ENCODE measurements at regions of chr1 and their contacts with region 1.

Region 1: DNA sequence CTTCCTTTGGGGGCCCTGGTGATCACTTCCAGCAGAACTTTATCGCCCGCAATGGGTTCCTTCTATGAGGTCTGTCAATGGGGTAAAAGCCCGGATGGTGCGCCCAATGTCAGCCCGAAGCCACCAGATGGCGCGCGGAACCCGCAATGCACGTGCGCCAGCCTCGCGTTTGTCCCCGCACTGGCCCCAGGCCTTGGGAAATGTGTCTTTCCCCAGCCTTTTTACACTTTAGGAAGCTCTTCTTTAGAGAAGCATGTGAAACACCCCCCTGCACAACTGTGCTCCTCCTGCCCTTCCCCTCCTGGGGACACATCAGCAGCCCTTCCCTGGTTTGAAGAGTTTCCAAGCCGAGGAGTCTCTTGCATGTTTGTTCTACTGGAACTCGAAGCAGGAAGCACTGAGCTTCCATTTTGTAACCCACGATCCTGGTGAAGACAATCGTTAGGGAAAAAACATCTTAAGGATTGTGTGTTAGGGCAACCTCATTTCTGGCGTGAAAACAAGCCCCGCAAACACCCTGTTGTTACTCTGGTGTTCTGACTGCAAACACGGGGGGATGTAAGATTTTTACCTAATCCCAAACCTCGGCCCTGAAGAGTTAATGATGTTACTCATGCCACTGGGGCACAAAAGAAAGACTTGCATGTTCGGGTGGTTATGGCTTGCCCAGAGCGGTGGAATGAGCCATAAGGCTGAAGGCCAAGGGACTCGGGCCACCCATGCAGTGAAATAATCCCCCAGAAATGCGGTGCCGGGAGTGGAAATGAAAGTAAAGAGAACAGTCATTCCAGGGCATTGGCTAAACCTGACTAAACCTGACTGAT is 20.4 kb upstream of the TARBP1 start:
- DNase-seq: peak; percentile 95
- H3K4me3 ChIP-seq: peak overlapping the region in 1 of 2 donors; percentile 13
- H3K27ac ChIP-seq: peak overlapping the region; percentile 31 to 89
- H3K4me1 ChIP-seq: peaks cover 18% of the 10 kb centered on the region
- H3K27me3 ChIP-seq: no peaks in the 10 kb centered on the region
- CTCF ChIP-seq: peak; percentile 88 to 97 (median 88)
- POLR2A ChIP-seq: no peak

Region 2: DNA sequence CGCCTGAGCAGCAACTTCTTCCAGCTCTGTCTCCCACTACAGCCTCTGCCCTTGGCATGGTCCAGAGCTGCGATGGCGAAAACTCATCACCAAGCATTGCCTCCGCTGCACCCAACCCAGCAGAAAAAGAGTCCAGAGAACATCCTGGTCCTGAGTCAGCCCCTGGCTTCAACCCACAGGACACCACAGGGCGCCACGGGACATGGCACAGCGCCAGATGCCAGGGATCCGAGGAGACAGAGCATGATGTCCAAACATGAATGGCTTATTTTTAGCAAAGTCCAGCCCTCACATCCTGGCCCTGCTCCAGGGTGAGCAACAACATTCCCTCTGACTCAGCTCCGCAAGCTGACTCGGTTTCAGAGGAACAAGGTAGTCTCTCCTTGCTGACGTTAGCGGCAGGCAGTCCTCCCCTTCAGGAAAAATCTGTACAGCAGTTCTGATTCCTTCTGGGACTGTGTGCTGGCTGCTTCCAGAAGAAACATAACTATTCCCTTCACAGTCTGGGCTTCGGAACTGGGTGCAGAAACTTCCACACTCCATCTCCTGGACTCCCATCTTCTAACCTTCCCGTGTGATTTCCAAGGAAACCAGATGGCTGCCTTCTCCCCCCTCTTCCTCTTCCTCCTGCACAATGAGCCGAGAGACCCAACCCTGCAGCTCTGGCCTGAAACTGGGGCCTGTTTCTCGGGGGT is 498.0 kb after region 1 on chr1:
- intact Hi-C with region 1: loop called (anchors 10 kb)
- DNase-seq: peak; percentile 94
- H3K4me3 ChIP-seq: no peak overlapping the region
- H3K27ac ChIP-seq: peak overlapping the region; percentile 53 to 85
- H3K4me1 ChIP-seq: peaks cover 18% of the 10 kb centered on the region
- H3K27me3 ChIP-seq: no peaks in the 10 kb centered on the region
- CTCF ChIP-seq: no peak
- POLR2A ChIP-seq: no peak

Region 3: DNA sequence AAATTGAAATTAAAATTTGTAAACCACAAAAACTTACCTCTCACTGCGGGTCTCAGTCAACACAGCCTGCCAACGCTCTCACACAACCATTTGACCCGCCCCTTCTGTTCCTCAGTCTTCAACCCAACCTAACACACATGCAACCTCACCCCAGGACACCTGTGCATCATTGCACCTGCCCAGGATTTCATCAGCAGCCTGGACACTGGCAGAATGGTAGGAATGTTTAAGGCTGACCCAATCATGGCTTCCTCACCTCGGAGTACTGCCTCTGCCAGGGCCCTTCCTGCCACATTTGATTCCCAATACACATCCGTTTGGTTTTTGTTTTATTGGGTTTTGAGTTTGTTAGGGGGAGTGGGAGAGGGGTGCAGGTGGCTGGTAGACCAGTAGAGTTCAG is 588.6 kb after region 1 on chr1:
- intact Hi-C with region 1: loop called (anchors 5 kb)
- DNase-seq: no peak
- H3K4me3 ChIP-seq: no peak overlapping the region
- H3K27ac ChIP-seq: no peak overlapping the region
- H3K4me1 ChIP-seq: peaks cover 17% of the 10 kb centered on the region
- H3K27me3 ChIP-seq: no peaks in the 10 kb centered on the region
- CTCF ChIP-seq: no peak
- POLR2A ChIP-seq: no peak